Esophagus muscularis mucosa (tissue), 4 donors: ENCODE measurements at regions of chr9 and their contacts with region 1.

Region 1: GRCh38 chr9:115192835-115193525 is 75.0 kb upstream of the TNC start:
- DNase-seq: no peak
- H3K4me3 ChIP-seq: no peak overlapping the region
- H3K27ac ChIP-seq: no peak overlapping the region
- H3K4me1 ChIP-seq: peaks cover 0 to 9% (median 3%) of the 10 kb centered on the region in 4 donors
- H3K27me3 ChIP-seq: no peaks in the 10 kb centered on the region
- CTCF ChIP-seq: no peak
- EP300 ChIP-seq: no peak
- POLR2A ChIP-seq: no peak

Region 2: DNA sequence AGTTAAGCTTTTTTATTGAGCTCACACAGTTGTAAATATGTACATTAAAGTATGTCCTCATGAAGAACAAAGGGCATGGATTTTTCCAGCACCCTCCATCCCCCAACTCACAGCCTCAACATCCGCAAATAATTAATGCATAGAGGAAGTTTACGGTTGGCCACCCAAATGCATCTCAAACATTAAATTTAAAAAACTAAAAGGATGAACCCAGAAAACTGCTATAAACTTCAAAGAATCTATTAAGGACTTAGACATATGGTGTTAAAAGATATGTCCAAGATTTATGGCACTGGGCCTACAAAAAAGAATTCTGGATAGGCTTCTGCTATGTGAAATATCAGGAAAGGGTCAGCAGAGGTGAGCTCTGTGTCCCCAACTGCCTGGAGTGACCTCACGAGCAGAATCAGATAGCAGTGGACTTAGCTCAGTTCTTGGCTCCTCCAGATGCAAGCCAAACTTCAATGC is 21.0 kb before region 1 on chr9:
- intact Hi-C with region 1: loop called (anchors 2 kb)
- DNase-seq: no peak
- H3K4me3 ChIP-seq: no peak overlapping the region
- H3K27ac ChIP-seq: no peak overlapping the region
- H3K4me1 ChIP-seq: no peaks in the 10 kb centered on the region
- H3K27me3 ChIP-seq: no peaks in the 10 kb centered on the region
- CTCF ChIP-seq: no peak
- EP300 ChIP-seq: no peak
- POLR2A ChIP-seq: no peak